CD8-positive, alpha-beta T cell (primary cell): ENCODE measurements at regions of chr19 and their contacts with region 1.

Region 1: DNA sequence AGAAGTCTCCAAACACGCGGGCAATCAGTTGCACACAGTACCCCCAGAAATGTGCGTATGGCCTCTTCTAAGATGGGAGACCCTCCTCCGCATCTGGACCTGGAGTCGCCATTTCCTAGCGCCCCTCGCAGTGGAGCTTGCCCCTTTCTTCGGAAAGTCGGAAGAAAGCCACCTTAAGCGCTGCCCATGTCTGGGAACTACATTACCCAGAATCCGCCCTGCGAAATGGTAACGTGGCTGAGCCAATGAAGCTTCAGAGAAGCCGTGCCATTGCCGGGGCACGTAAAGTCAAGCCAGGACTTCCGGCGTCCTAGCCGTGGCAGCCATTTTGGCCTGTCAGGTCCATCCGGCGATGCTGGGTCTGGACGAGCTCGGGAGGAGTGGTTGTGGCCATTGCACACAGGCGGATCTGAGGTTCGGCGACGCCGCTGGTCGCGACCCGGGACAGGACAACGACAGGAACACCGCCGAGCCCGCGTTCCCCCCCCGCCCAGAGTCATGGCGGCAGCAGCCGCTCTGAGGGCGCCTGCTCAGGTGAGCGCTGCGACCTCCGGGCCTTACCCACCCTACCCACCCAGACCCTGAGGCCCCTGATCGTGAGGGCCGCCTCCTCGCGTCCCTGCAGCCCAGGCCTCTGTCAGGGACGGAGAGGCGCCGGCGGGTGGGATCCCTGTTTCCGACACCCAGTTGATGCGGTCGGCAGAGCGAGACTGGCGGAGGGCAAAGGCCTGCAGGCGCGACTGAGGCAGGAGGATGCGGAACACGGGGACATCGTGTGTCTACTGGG is at the start of gene ZNF586:
- DNase-seq: peak; percentile 64 to 94 (median 86)
- ATAC-seq: peak; percentile 99
- H3K4me3 ChIP-seq: peak within 1 kb of the TSS; percentile 73 to 90
- H3K4me3 Mint-ChIP-seq: peak within 1 kb of the TSS; percentile 94
- H3K27ac ChIP-seq: peak within 1 kb of the TSS; percentile 61 to 86
- H3K27ac Mint-ChIP-seq: peak within 1 kb of the TSS; percentile 97
- H3K4me1 ChIP-seq: peaks cover 17% of the 10 kb centered on the region
- H3K4me1 Mint-ChIP-seq: peaks cover 35% of the 10 kb centered on the region
- H3K27me3 ChIP-seq: no peaks in the 10 kb centered on the region
- H3K27me3 Mint-ChIP-seq: no peaks in the 10 kb centered on the region
- CTCF ChIP-seq: no peak
- total RNA-seq, gene ZNF586: 54.0 to 57.6 TPM

Region 2: GRCh38 chr19:57746580-57747471 is 22.7 kb before region 1 on chr19 and contains the start of gene ZNF776:
- CTCF ChIA-PET with region 1: no interaction called
- POLR2A ChIA-PET with region 1: interaction called, 5 read pairs
- intact Hi-C with region 1: loop called (anchors 1 kb)
- DNase-seq: peak; percentile 63 to 93 (median 84)
- ATAC-seq: peak; percentile 96
- H3K4me3 ChIP-seq: peak within 1 kb of the TSS; percentile 75 to 84
- H3K4me3 Mint-ChIP-seq: peak within 1 kb of the TSS; percentile 95
- H3K27ac ChIP-seq: peak within 1 kb of the TSS; percentile 71 to 80
- H3K27ac Mint-ChIP-seq: peak within 1 kb of the TSS; percentile 98
- H3K4me1 ChIP-seq: peaks cover 16% of the 10 kb centered on the region
- H3K4me1 Mint-ChIP-seq: peaks cover 41% of the 10 kb centered on the region
- H3K27me3 ChIP-seq: no peaks in the 10 kb centered on the region
- H3K27me3 Mint-ChIP-seq: no peaks in the 10 kb centered on the region
- CTCF ChIP-seq: no peak
- total RNA-seq, gene ZNF776: 22.3 to 32.3 TPM